ENCODE measurements at regions of chr2 and their contacts with region 1.

Region 1: GRCh38 chr2:227388537-227389011 is 825 bp upstream of the SCYGR1 start:
- DNase-seq: peak; percentile 95
- ATAC-seq: no peak
- H3K4me3 ChIP-seq: no peak overlapping the region
- H3K27ac ChIP-seq: no peak overlapping the region
- H3K4me1 ChIP-seq: peaks cover 3% of the 10 kb centered on the region; the same call in 1 of the 2 replicates
- H3K27me3 ChIP-seq: peaks cover 2% of the 10 kb centered on the region; the same call in 1 of the 2 replicates
- CTCF ChIP-seq: no peak

Region 2: DNA sequence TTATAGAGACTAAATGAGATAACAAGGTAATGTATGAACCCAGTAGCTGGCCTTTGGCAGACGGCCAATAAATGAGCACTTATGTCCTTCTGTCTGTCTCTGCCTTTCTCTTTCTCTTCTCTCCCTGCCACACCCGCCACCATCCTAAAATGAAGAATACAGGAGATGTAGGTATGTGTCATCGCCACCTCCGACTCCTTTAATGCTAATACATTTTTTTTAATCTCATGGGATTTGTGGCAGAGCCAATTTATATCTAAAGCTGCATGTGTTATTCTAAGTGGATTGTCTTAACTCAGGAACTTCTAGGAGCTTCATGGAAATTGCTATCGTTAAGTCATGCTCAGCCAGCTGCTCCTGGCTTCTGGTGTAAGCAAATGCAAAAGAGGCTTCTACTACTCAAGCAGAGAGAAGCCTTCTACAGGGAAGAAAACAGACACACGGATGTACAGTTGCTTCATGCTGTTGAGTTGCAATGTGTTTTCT is 11.6 kb before region 1 on chr2:
- CTCF ChIA-PET with region 1: interaction called, 4 read pairs
- POLR2A ChIA-PET with region 1: no interaction called
- in situ Hi-C with region 1: no loop called
- intact Hi-C with region 1: loop called (anchors 1 kb)
- DNase-seq: no peak
- ATAC-seq: no peak
- H3K4me3 ChIP-seq: no peak overlapping the region
- H3K27ac ChIP-seq: no peak overlapping the region
- H3K4me1 ChIP-seq: no peaks in the 10 kb centered on the region
- H3K27me3 ChIP-seq: peaks cover 5% of the 10 kb centered on the region; the same call in 1 of the 2 replicates
- CTCF ChIP-seq: no peak